ENCODE measurements at regions of chr10 and their contacts with region 1.

Region 1: DNA sequence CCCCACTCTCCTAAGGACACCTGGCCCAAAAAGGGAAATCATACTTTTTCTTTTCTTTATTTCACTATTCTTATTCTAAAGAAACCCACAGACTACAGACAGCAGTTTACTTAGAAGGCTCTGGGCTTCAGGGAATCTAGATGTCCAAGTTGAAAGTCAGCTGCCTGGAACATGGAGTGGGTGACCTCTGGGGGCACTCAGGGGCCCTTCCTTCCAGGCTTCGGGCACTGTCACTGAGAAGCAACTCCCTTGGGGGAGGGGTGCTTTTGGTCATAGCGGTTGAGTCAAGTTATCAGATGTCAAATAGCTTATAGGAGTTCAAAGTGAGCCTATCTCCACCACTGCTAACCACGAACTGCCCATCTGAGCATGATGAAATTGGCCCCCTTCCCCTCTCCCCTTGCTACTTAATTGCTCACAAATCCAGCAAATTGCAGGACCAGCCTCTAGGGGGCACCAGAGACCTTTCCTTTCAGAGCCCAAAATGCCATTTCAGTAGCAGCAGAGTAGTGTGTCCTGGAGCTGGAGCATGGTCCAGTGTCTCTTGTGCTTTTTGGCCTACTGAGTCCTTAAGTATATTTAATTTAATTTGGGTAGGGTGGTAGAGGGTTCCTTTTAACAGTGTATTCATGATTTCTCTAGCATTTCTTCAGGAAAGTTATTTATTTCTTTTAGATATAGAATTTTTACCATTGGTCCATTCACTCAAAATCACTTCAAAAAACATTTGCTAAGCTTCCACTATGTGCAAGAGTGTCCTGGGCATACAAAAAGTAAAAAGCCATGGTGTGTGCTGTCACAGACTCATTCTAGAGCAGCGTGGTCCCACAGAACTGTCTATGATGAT is 463.8 kb downstream of the KCNMA1 start:
- DNase-seq: peak; percentile 75
- H3K4me3 ChIP-seq: no peak overlapping the region
- H3K27ac ChIP-seq: no peak overlapping the region
- H3K4me1 ChIP-seq: peaks cover under 1% of the 10 kb centered on the region
- H3K27me3 ChIP-seq: no peaks in the 10 kb centered on the region
- CTCF ChIP-seq: peak; percentile 86 to 90
- POLR2A ChIP-seq: no peak

Region 2: GRCh38 chr10:76950354-76950753 is 223.5 kb before region 1 on chr10:
- CTCF ChIA-PET with region 1: no interaction called
- POLR2A ChIA-PET with region 1: no interaction called
- dilution Hi-C with region 1: no loop called
- intact Hi-C with region 1: no loop called
- DNase-seq: no peak
- H3K4me3 ChIP-seq: no peak overlapping the region
- H3K27ac ChIP-seq: no peak overlapping the region
- H3K4me1 ChIP-seq: no peaks in the 10 kb centered on the region
- H3K27me3 ChIP-seq: no peaks in the 10 kb centered on the region
- CTCF ChIP-seq: no peak
- POLR2A ChIP-seq: no peak

Region 3: DNA sequence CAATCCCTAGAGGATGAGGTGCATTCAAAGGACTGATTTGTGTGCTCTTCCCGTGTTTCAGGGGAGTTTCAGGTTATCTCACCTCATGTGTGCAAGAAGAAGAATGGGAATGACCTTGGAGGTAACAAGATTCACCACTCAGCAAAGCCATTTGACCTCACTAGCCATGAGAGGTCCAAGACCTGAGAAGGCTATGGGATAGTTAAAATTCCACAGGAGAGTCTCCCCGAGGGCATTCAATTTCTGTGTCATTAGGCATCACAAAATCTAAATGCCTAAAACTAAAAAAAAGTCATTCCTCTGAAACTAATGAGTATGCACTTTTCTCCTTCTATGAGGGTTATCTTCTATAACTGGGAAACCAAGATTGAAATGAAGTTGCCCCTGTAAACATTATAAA is 30.3 kb after region 1 on chr10:
- CTCF ChIA-PET with region 1: interaction called, 12 read pairs
- POLR2A ChIA-PET with region 1: no interaction called
- dilution Hi-C with region 1: no loop called
- intact Hi-C with region 1: no loop called
- DNase-seq: no peak
- H3K4me3 ChIP-seq: no peak overlapping the region
- H3K27ac ChIP-seq: no peak overlapping the region
- H3K4me1 ChIP-seq: peaks cover 10% of the 10 kb centered on the region
- H3K27me3 ChIP-seq: peaks cover 0 to 9% of the 10 kb centered on the region in 2 experiments
- CTCF ChIP-seq: no peak
- POLR2A ChIP-seq: no peak

Region 4: GRCh38 chr10:77230194-77230593 is 56.4 kb after region 1 on chr10:
- CTCF ChIA-PET with region 1: no interaction called
- POLR2A ChIA-PET with region 1: no interaction called
- dilution Hi-C with region 1: no loop called
- intact Hi-C with region 1: no loop called
- DNase-seq: no peak
- H3K4me3 ChIP-seq: no peak overlapping the region
- H3K27ac ChIP-seq: no peak overlapping the region
- H3K4me1 ChIP-seq: no peaks in the 10 kb centered on the region
- H3K27me3 ChIP-seq: peaks cover 0 to 9% of the 10 kb centered on the region in 2 experiments
- CTCF ChIP-seq: no peak
- POLR2A ChIP-seq: no peak

Region 5: DNA sequence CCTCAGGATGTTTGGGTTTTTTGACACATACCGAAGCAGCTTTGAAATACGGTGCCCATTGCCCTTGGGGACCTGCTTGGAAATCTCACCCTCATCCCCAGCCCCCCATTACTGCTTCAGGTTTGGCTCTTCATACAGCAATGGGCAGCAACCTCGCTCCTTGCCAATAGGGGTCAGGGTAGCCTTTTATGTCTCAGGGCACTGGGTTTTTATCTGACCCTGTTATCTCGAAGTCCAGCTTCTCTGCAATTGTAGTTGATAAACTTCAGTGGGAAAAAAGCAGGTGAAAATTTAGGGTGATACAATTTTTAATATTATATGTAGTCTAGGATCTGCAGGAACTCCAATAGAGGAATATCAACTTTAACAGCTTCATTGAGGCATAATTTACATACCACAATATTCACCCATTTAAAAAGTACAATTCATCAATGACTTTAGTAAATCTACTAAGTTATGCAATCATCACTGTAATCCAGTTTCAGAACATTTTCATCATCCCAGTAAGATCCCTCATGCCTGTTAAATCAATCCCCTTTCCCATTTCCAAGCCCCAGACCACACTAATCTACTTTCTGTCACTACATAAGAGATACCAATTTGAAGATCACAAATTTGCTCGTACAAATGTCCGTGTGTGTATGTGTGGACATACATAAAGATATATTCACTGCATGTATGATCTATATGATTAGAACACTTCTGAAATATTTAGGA is 77.6 kb after region 1 on chr10:
- CTCF ChIA-PET with region 1: interaction called, 44 read pairs
- POLR2A ChIA-PET with region 1: no interaction called
- dilution Hi-C with region 1: no loop called
- intact Hi-C with region 1: loop called (anchors 1 kb)
- DNase-seq: peak; percentile 55
- H3K4me3 ChIP-seq: no peak overlapping the region
- H3K27ac ChIP-seq: no peak overlapping the region
- H3K4me1 ChIP-seq: no peaks in the 10 kb centered on the region
- H3K27me3 ChIP-seq: peaks cover 0 to 2% of the 10 kb centered on the region in 2 experiments
- CTCF ChIP-seq: peak; percentile 67 to 72
- POLR2A ChIP-seq: no peak